PC-9 (cell line): ENCODE measurements at regions of chr5 and their contacts with region 1.

Region 1: GRCh38 chr5:132586063-132586462 is 29.3 kb downstream of the RAD50 start:
- DNase-seq: no peak
- H3K4me3 ChIP-seq: no peak overlapping the region
- H3K27ac ChIP-seq: no peak overlapping the region
- H3K4me1 ChIP-seq: no peaks in the 10 kb centered on the region
- H3K27me3 ChIP-seq: no peaks in the 10 kb centered on the region
- CTCF ChIP-seq: no peak

Region 2: GRCh38 chr5:132797651-132798050 is 211.6 kb after region 1 on chr5:
- CTCF ChIA-PET with region 1: no interaction called
- POLR2A ChIA-PET with region 1: interaction called, 15 read pairs
- intact Hi-C with region 1: no loop called
- DNase-seq: no peak
- H3K4me3 ChIP-seq: no peak overlapping the region
- H3K27ac ChIP-seq: no peak overlapping the region
- H3K4me1 ChIP-seq: no peaks in the 10 kb centered on the region
- H3K27me3 ChIP-seq: no peaks in the 10 kb centered on the region
- CTCF ChIP-seq: no peak